ENCODE measurements at regions of chr9 and their contacts with region 1.

Region 1: GRCh38 chr9:104586496-104587180 is 12.6 kb downstream of the OR13C5 start:
- DNase-seq: no peak
- H3K4me3 ChIP-seq: no peak overlapping the region
- H3K27ac ChIP-seq: no peak overlapping the region
- H3K4me1 ChIP-seq: no peaks in the 10 kb centered on the region
- H3K27me3 ChIP-seq: no peaks in the 10 kb centered on the region
- CTCF ChIP-seq: no peak

Region 2: DNA sequence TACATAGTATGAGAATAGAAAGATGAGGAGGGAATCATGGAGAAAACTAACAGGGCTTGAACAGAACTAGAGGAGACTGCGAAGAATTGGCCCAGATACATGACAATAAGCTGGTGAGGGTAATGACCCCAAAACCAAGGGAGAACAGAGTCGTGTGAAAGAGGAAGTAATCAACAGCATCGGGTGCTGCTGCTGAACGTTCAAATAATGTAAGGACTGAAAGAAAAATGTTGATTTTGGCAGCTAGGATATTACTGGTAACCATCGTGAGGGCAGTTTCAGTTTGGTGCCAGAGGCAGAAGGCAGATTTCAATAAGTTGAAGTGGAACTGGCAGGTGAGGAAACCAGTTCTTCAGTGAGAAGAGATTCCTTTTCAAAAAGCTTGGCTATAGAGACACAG is 559.3 kb before region 1 on chr9:
- CTCF ChIA-PET with region 1: interaction called, 12 read pairs
- dilution Hi-C with region 1: no loop called
- in situ Hi-C with region 1: no loop called
- intact Hi-C with region 1: no loop called
- DNase-seq: no peak
- H3K4me3 ChIP-seq: no peak overlapping the region
- H3K27ac ChIP-seq: no peak overlapping the region
- H3K4me1 ChIP-seq: no peaks in the 10 kb centered on the region
- H3K27me3 ChIP-seq: no peaks in the 10 kb centered on the region
- CTCF ChIP-seq: no peak